ENCODE measurements at regions of chr20 and their contacts with region 1.

Region 1: GRCh38 chr20:4014031-4014474 is 1.3 kb downstream of the RNF24 start:
- DNase-seq: peak in 2 of 4 donors; percentile 48 to 78
- ATAC-seq: peak; percentile 76
- H3K4me3 ChIP-seq: peak overlapping the region; percentile 75 to 92
- H3K27ac ChIP-seq: peak overlapping the region; percentile 84 to 93
- H3K4me1 ChIP-seq: peaks cover 14 to 89% of the 10 kb centered on the region in 2 donors
- H3K27me3 ChIP-seq: no peaks in the 10 kb centered on the region
- CTCF ChIP-seq: peak; percentile 18 to 36

Region 2: GRCh38 chr20:3888622-3889488 is 125.2 kb before region 1 on chr20 and contains the start of gene PANK2:
- intact Hi-C with region 1: loop called in 1 of 2 experiments (anchors 10 kb)
- DNase-seq: peak; percentile 99 to 100 (median 99)
- ATAC-seq: peak; percentile 97
- H3K4me3 ChIP-seq: peak within 1 kb of the TSS; percentile 93 to 97
- H3K27ac ChIP-seq: peak within 1 kb of the TSS; percentile 97
- H3K4me1 ChIP-seq: peaks cover 22 to 52% of the 10 kb centered on the region in 2 donors
- H3K27me3 ChIP-seq: no peaks in the 10 kb centered on the region
- CTCF ChIP-seq: peak in 1 of 2 donors; percentile 32
- polyA plus RNA-seq, gene PANK2: 34.1 to 41.0 (median 36.5) TPM

Region 3: DNA sequence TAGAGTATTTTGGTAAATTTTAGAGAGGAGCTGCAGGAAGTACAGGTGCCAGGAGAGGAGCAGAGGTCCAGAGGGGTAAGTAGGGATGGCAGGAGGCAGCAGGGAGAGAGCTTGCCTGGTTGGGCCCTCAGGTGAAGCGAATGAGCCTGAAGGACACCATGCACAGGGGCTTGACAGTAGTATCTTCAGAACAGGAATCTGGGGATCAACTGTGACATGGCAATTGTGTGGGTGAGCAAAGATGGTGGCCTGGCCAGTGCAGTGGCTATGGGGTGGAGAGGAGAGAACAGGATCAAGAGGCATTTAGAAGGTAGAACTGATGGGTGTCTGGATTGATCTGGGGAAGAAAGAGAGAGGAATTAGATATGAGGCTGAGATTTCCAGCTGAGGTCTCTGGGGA is 70.0 kb after region 1 on chr20:
- intact Hi-C with region 1: loop called in 1 of 2 experiments (anchors 2 kb)
- DNase-seq: no peak
- ATAC-seq: no peak
- H3K4me3 ChIP-seq: no peak overlapping the region
- H3K27ac ChIP-seq: peak overlapping the region in 1 of 2 donors; percentile 93
- H3K4me1 ChIP-seq: peaks cover 3 to 57% of the 10 kb centered on the region in 2 donors
- H3K27me3 ChIP-seq: no peaks in the 10 kb centered on the region
- CTCF ChIP-seq: no peak

Region 4: DNA sequence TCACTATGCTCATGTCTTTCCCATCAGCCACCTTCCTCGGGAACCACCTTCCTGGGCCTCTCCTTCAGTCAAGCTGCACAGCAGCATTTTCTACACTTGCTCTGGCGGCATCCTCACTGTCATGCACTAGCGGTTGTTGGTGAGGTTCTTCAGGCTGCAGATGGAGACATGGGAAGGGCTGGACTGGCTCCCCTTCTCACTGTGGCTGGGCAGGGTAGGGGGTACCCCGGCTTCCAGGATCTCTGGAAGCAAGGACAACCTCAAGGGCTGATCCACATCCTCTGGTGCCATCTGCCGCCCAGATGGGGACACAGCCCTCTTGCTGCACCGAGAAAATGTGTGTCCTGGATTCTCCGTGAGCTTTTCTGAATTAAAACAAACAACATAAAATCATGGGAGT is 181.4 kb after region 1 on chr20:
- intact Hi-C with region 1: no loop called
- DNase-seq: no peak
- ATAC-seq: no peak
- H3K4me3 ChIP-seq: no peak overlapping the region
- H3K27ac ChIP-seq: no peak overlapping the region
- H3K4me1 ChIP-seq: no peaks in the 10 kb centered on the region
- H3K27me3 ChIP-seq: peaks cover 0 to 6% of the 10 kb centered on the region in 2 donors
- CTCF ChIP-seq: no peak

Region 5: GRCh38 chr20:4244700-4245485 is 230.8 kb after region 1 on chr20:
- intact Hi-C with region 1: no loop called
- DNase-seq: peak in 2 of 4 donors; percentile 73 to 90
- ATAC-seq: no peak
- H3K4me3 ChIP-seq: no peak overlapping the region
- H3K27ac ChIP-seq: no peak overlapping the region
- H3K4me1 ChIP-seq: peaks cover 3 to 14% of the 10 kb centered on the region in 2 donors
- H3K27me3 ChIP-seq: peaks cover 32 to 89% of the 10 kb centered on the region in 2 donors
- CTCF ChIP-seq: no peak